MCF 10A (cell line): ENCODE measurements at regions of chr2 and their contacts with region 1.

Region 1: DNA sequence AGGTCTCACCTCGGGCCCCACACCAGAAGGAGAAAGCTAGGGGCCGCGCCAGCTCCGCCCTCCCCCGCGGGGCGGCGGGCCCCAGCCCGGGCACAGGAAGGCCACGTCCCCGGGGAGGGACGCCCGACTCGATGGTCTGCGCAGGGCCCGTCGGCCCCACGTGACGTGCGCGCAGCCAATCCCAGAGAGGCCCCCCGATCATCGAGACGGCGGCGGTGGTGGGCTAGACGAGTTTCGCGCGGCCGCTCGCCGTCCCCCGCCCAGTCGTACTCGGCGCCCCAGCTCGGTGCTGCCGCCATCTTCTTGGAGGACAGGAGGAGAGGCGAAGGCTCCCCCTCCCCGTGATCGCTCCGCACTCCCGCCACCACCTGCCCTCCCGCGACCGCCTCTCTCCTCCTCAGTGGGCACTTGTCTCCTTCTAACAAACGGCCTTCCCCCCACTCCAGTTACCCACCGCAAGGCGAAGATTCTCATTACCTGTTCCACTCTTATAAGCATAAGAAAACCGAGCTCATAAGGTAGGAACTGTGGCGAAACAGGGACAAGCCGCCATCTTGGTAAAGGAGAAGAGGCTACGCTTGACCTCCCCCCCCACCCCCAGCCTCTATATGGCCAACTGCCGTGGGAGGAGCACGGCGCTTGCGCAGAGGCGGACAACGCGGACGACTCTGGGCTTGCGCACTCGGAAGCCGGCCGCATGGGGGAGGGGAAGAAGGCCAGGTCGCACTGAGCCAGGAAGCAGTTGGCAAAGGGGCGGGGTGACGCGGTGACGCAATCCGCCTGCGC is at the start of gene HDLBP:
- DNase-seq: peak; percentile 98
- H3K4me3 Mint-ChIP-seq: peak within 1 kb of the TSS; percentile 98
- H3K27ac Mint-ChIP-seq: peak within 1 kb of the TSS; percentile 100
- H3K4me1 Mint-ChIP-seq: peaks cover 38% of the 10 kb centered on the region
- H3K27me3 Mint-ChIP-seq: no peaks in the 10 kb centered on the region
- CTCF ChIP-seq: peak; percentile 25
- total RNA-seq, gene HDLBP: 670 and 743 TPM in 2 replicates

Region 2: GRCh38 chr2:241271641-241272297 is 43.5 kb before region 1 on chr2:
- CTCF ChIA-PET with region 1: interaction called, 4 read pairs
- POLR2A ChIA-PET with region 1: interaction called, 38 read pairs
- intact Hi-C with region 1: loop called (anchors 2 kb)
- DNase-seq: peak; percentile 83
- H3K4me3 Mint-ChIP-seq: peak overlapping the region; percentile 92
- H3K27ac Mint-ChIP-seq: peak overlapping the region; percentile 88
- H3K4me1 Mint-ChIP-seq: peaks cover 48% of the 10 kb centered on the region
- H3K27me3 Mint-ChIP-seq: no peaks in the 10 kb centered on the region
- CTCF ChIP-seq: no peak

Region 3: GRCh38 chr2:241300000-241300399 is 15.3 kb before region 1 on chr2:
- CTCF ChIA-PET with region 1: interaction called, 4 read pairs
- POLR2A ChIA-PET with region 1: interaction called, 263 read pairs
- intact Hi-C with region 1: no loop called
- DNase-seq: no peak
- H3K4me3 Mint-ChIP-seq: no peak overlapping the region
- H3K27ac Mint-ChIP-seq: no peak overlapping the region
- H3K4me1 Mint-ChIP-seq: peaks cover 22% of the 10 kb centered on the region
- H3K27me3 Mint-ChIP-seq: no peaks in the 10 kb centered on the region
- CTCF ChIP-seq: no peak

Region 4: DNA sequence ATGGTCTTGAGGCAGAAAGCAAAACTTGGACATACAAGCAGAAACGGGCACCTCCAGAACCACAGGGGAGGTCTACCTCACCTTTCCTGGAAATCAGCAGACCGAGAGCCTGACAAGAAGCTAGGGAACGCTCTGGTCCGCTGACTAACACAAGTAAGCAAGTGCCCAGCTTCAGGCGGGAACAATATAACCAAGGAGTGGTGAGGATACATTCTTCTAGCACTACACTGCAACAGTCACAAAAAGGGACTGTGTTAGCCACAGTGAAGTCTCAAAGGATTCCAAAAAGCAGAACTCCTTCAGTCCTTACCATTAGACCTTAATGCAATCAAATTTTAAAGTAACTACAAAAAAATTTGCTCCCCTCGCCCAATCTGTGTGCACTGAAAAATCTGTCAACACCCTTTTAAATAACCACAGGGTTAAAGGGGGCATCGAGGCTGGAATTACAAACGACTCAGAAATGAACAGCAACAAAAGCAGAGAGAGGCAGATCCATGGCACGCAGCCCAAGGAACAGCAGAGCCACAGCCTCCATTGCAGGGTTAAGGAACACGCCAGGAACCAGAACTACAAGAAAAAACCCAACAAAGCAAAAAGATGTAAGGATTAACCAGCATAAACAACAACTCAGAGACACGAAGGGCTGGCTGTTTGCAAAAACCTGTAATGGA is 314.6 kb after region 1 on chr2:
- CTCF ChIA-PET with region 1: no interaction called
- POLR2A ChIA-PET with region 1: no interaction called
- intact Hi-C with region 1: no loop called
- DNase-seq: no peak
- H3K4me3 Mint-ChIP-seq: no peak overlapping the region
- H3K27ac Mint-ChIP-seq: no peak overlapping the region
- H3K4me1 Mint-ChIP-seq: peaks cover under 1% of the 10 kb centered on the region
- H3K27me3 Mint-ChIP-seq: no peaks in the 10 kb centered on the region
- CTCF ChIP-seq: no peak

Region 5: GRCh38 chr2:241708879-241709278 is 393.6 kb after region 1 on chr2:
- CTCF ChIA-PET with region 1: no interaction called
- POLR2A ChIA-PET with region 1: no interaction called
- intact Hi-C with region 1: no loop called
- DNase-seq: no peak
- H3K4me3 Mint-ChIP-seq: no peak overlapping the region
- H3K27ac Mint-ChIP-seq: no peak overlapping the region
- H3K4me1 Mint-ChIP-seq: no peaks in the 10 kb centered on the region
- H3K27me3 Mint-ChIP-seq: no peaks in the 10 kb centered on the region
- CTCF ChIP-seq: no peak